Left colon (tissue), 2 donors: ENCODE measurements at regions of chr1 and their contacts with region 1.

Region 1: DNA sequence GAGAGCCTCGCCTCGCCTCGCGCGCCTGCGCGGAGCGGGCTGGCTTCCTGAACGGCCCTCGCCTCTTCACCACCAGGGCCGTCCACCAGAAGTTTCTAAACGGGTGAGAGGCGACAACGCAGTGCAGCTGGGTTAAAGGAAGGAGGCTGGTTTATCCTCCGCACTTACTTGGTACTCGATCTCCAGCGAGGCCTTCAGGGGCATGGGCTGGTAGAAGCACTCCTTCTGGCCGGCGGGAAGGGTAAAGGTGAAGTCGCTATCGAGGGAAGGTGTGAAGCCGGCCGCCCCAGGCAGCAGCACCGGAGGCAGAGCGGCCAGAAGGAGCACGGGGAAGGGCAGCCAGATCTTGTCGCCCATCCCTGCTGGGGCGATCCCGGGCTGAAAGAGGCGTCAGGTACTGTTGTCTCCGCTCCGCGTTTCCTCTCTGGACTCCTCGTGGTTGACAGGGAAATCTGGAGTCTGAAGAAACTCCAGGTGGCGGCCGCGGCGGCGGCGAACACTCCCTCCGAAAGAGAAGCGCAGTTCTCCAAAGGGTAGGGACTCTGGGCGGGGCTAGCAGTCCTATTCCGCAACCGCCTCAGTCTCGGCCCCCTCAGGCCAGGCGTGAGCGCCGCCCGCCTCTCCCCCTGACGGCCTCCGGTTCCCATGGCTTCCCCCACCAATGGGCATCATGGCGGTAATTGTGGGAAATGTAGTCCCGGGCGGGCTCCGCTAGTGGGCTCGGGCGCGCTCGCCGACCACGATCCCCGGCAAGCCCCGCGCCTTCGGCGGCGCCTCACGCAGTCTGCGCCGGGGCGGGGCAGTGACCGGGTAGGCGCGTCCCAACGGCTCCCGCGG is at the start of gene TMED5:
- DNase-seq: peak; percentile 97 to 99
- ATAC-seq: peak; percentile 93
- total RNA-seq, gene TMED5: 55.2 to 62.5 TPM

Region 2: DNA sequence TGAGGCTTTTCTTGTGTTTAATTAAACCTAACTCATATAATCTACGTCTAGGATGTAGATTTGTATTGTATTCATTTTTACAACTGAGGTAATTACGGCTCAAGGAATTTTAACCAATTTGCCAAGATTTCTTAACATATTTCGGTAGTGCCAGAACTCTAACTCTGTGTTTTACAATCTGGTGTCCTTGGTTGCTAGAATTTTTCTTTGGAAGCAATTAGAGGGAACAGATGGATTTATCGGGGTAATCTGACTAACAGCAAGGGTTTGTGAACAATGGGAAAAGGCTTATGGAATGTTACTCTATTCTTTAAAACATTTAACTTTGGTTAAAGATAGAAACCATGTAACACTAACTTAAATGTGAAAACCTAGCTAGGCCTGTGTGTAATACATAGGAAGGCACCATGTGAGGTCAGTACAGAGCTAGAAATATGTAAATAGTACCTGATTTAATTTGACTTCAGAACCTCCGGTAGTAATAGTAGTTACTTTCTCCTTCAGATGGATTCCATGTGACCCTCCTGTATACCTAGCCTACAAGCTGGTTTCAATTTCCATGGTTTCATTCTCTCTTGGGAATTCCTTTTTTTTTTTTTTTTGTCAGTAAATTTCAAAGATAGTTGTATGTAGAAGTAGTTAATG is 99.8 kb before region 1 on chr1:
- intact Hi-C with region 1: loop called in 1 of 2 experiments (anchors 10 kb)
- DNase-seq: no peak
- ATAC-seq: peak; percentile 68

Region 3: DNA sequence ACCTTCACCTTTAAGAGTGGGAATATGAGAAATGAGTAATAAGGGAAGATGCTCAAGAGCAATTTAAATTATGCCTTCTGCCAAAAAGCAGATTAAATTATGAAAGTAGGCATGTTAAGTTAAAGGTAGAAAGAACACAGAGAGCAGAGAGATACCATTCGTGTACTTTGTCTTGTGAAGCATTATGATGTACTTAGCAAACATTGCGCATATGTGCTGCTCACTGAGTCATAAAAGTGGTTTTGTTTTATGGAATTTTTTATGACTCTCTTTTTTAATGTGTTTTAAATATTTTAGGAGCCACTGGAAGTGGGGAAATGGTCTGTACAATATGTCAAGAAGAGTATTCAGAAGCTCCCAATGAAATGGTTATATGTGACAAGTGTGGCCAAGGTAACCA is 65.7 kb before region 1 on chr1:
- intact Hi-C with region 1: no loop called
- DNase-seq: no peak
- ATAC-seq: peak; percentile 87